ENCODE measurements at regions of chr3 and their contacts with region 1.

Region 1: GRCh38 chr3:99544786-99545281 is 93.6 kb upstream of the COL8A1 start:
- DNase-seq: peak; percentile 100
- H3K4me3 ChIP-seq: no peak overlapping the region
- H3K27ac ChIP-seq: peak overlapping the region; percentile 97
- H3K4me1 ChIP-seq: peaks cover 77% of the 10 kb centered on the region
- H3K27me3 ChIP-seq: no peaks in the 10 kb centered on the region
- CTCF ChIP-seq: no peak
- POLR2A ChIP-seq: peak; percentile 55

Region 2: DNA sequence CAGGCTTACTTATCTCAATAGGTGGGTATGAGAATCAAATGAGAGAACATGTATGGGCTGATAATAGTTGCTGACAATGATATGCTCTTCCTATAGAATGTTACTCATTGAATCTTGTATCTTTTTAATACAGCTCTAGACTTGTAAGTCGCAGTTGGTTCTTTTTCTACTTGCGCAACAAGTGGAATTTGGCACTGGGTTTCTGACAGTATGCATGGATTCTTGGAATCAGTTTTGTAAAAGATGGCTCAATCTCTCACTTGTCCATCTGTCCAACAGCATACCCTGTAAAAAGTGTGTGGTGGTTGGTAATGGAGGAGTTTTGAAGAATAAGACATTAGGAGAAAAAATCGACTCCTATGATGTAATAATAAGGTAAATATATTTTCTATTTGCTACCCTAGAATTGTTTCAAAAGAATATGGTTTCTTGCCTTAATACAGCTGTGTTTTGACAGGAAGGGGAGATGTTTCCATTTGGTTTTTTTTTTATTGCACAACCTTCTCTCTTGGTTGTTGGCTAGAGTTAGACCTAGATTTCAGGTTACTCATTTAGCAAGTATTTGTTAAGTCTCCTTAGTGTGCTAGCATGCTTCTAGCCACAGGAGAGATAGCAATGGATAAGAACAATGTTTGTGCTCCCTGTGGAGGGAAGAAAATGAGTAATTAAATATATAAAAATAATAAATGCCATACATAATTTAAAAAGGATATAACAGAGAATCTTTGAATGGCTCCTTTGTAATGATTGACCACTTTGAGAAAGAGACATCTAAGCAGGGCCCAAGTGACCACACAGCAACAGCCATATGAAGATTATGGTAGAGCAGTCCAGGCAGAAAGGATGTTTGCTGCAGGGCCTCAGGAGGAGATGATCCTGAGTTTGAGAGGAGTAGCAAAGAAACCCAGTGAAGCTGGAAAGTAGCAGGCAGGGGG is 759.9 kb before region 1 on chr3:
- CTCF ChIA-PET with region 1: no interaction called
- POLR2A ChIA-PET with region 1: no interaction called
- dilution Hi-C with region 1: no loop called
- intact Hi-C with region 1: no loop called
- DNase-seq: peak; percentile 40
- H3K4me3 ChIP-seq: no peak overlapping the region
- H3K27ac ChIP-seq: no peak overlapping the region
- H3K4me1 ChIP-seq: peaks cover 23% of the 10 kb centered on the region
- H3K27me3 ChIP-seq: no peaks in the 10 kb centered on the region
- CTCF ChIP-seq: no peak
- POLR2A ChIP-seq: no peak

Region 3: DNA sequence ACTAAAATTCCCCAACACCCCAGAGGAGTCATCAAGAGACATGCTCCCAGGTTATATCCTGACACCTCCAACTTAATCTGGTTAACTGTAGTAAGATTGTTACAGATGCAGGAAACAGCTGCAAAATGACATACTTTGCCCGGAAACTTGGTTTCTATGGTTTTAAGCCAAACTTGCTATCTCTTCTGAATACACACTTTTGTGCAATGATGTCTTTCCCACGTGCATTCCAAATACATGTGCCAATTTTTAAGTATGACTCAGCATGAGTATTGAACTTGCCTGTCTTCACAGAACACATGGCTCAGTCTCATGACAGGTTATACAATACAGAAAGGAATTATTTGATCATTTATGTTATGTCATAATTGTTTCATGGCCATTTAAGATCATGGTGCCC is 436.3 kb before region 1 on chr3:
- CTCF ChIA-PET with region 1: no interaction called
- POLR2A ChIA-PET with region 1: no interaction called
- dilution Hi-C with region 1: no loop called
- intact Hi-C with region 1: loop called (anchors 1 kb)
- DNase-seq: peak; percentile 97
- H3K4me3 ChIP-seq: no peak overlapping the region
- H3K27ac ChIP-seq: peak overlapping the region; percentile 79
- H3K4me1 ChIP-seq: peaks cover 17% of the 10 kb centered on the region
- H3K27me3 ChIP-seq: no peaks in the 10 kb centered on the region
- CTCF ChIP-seq: no peak
- POLR2A ChIP-seq: no peak

Region 4: GRCh38 chr3:99313485-99313884 is 231.3 kb before region 1 on chr3:
- CTCF ChIA-PET with region 1: no interaction called
- POLR2A ChIA-PET with region 1: no interaction called
- dilution Hi-C with region 1: no loop called
- intact Hi-C with region 1: loop called (anchors 1 kb)
- DNase-seq: peak; percentile 89
- H3K4me3 ChIP-seq: no peak overlapping the region
- H3K27ac ChIP-seq: peak overlapping the region; percentile 75
- H3K4me1 ChIP-seq: peaks cover 29% of the 10 kb centered on the region
- H3K27me3 ChIP-seq: no peaks in the 10 kb centered on the region
- CTCF ChIP-seq: no peak
- POLR2A ChIP-seq: no peak

Region 5: GRCh38 chr3:99638167-99638948 is 93.5 kb after region 1 on chr3 and contains the start of gene COL8A1:
- CTCF ChIA-PET with region 1: interaction called, 24 read pairs
- POLR2A ChIA-PET with region 1: interaction called, 31 read pairs
- dilution Hi-C with region 1: no loop called
- intact Hi-C with region 1: loop called (anchors 1 kb)
- DNase-seq: peak; percentile 94
- H3K4me3 ChIP-seq: peak within 1 kb of the TSS; percentile 90 to 94 (median 91)
- H3K27ac ChIP-seq: peak within 1 kb of the TSS; percentile 100
- H3K4me1 ChIP-seq: peaks cover 72% of the 10 kb centered on the region
- H3K27me3 ChIP-seq: no peaks in the 10 kb centered on the region
- CTCF ChIP-seq: no peak
- POLR2A ChIP-seq: peak; percentile 94
- total RNA-seq, gene COL8A1: 217 and 358 TPM in 2 replicates

Region 6: GRCh38 chr3:99696497-99696896 is 151.7 kb after region 1 on chr3:
- CTCF ChIA-PET with region 1: no interaction called
- POLR2A ChIA-PET with region 1: no interaction called
- dilution Hi-C with region 1: no loop called
- intact Hi-C with region 1: no loop called
- DNase-seq: no peak
- H3K4me3 ChIP-seq: no peak overlapping the region
- H3K27ac ChIP-seq: no peak overlapping the region
- H3K4me1 ChIP-seq: peaks cover 34% of the 10 kb centered on the region
- H3K27me3 ChIP-seq: no peaks in the 10 kb centered on the region
- CTCF ChIP-seq: no peak
- POLR2A ChIP-seq: no peak

Region 7: DNA sequence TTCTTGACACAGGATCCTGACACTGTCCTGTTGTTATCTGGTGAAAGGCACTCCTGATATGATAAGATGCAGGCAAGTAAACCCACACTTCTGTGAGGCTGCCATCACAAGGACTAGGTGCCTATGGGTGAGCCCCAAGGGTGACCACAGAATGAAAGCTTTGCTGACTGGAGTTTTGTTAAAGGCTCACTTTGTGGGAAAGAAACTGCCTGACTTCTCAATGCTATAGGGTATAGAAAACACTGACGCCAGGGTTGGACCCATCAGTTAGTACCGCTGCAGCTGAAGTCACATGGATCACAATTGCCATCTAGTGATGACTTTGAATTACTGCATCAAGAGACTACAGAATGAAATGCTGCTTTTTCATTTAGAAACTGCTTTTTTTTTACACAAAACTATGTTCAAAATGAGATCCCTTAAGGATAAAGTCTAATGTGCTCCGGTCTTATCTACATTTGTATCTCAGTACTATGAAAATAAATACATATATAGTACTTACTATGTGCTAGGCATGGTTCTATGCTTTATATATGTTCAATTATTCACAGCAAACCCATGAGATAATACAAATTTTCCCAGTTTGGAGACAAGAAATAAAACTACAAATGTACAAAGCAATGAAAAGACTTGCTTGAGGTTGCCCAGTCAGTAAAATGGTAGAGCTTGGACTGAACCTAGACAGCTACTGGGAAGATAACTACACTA is 208.6 kb after region 1 on chr3:
- CTCF ChIA-PET with region 1: interaction called, 4 read pairs
- POLR2A ChIA-PET with region 1: no interaction called
- dilution Hi-C with region 1: no loop called
- intact Hi-C with region 1: loop called (anchors 2 kb)
- DNase-seq: peak; percentile 77
- H3K4me3 ChIP-seq: no peak overlapping the region
- H3K27ac ChIP-seq: peak overlapping the region; percentile 21
- H3K4me1 ChIP-seq: peaks cover 28% of the 10 kb centered on the region
- H3K27me3 ChIP-seq: no peaks in the 10 kb centered on the region
- CTCF ChIP-seq: peak; percentile 56 to 58
- POLR2A ChIP-seq: no peak